ENCODE measurements at regions of chr3 and their contacts with region 1.

Region 1: GRCh38 chr3:129490242-129491045 is 38.0 kb upstream of the RHO start:
- DNase-seq: peak; percentile 84 to 86
- ATAC-seq: peak; percentile 64 to 75
- H3K4me3 ChIP-seq: no peak overlapping the region
- H3K27ac ChIP-seq: peak overlapping the region; percentile 71 to 84 (median 78)
- H3K4me1 ChIP-seq: peaks cover 39 to 47% of the 10 kb centered on the region in 2 donors
- H3K27me3 ChIP-seq: no peaks in the 10 kb centered on the region
- CTCF ChIP-seq: peak; percentile 81 to 91 (median 88)
- POLR2A ChIP-seq: no peak

Region 2: GRCh38 chr3:129180461-129180860 is 310.0 kb before region 1 on chr3:
- in situ Hi-C with region 1: no loop called
- intact Hi-C with region 1: no loop called
- DNase-seq: peak; percentile 50 to 71
- ATAC-seq: peak; percentile 21 to 38
- H3K4me3 ChIP-seq: peak overlapping the region; percentile 85 to 97 (median 95)
- H3K27ac ChIP-seq: peak overlapping the region; percentile 96 to 100 (median 100)
- H3K4me1 ChIP-seq: peaks cover 60 to 64% of the 10 kb centered on the region in 2 donors
- H3K27me3 ChIP-seq: no peaks in the 10 kb centered on the region
- CTCF ChIP-seq: no peak
- POLR2A ChIP-seq: peak in 1 of 2 donors; percentile 47

Region 3: GRCh38 chr3:129606636-129607390 is 116.4 kb after region 1 on chr3 and contains the start of gene PLXND1:
- in situ Hi-C with region 1: loop called in 1 of 4 experiments (anchors 10 kb)
- intact Hi-C with region 1: loop called (anchors 5 kb)
- DNase-seq: peak; percentile 47 to 51
- ATAC-seq: peak; percentile 38 to 52
- H3K4me3 ChIP-seq: peak within 1 kb of the TSS; percentile 61 to 66 (median 62)
- H3K27ac ChIP-seq: peak within 1 kb of the TSS; percentile 82 to 93 (median 86)
- H3K4me1 ChIP-seq: peaks cover 26 to 44% of the 10 kb centered on the region in 2 donors
- H3K27me3 ChIP-seq: peaks cover 0 to 15% (median 6%) of the 10 kb centered on the region in 3 donors
- CTCF ChIP-seq: no peak
- POLR2A ChIP-seq: peak; percentile 34 to 55
- total RNA-seq, gene PLXND1: 15.7 to 70.9 (median 19.9) TPM

Region 4: GRCh38 chr3:129611812-129612533 is 121.5 kb after region 1 on chr3:
- in situ Hi-C with region 1: loop called in 1 of 4 experiments (anchors 10 kb)
- intact Hi-C with region 1: loop called (anchors 5 kb)
- DNase-seq: no peak
- ATAC-seq: no peak
- H3K4me3 ChIP-seq: no peak overlapping the region
- H3K27ac ChIP-seq: peak overlapping the region; percentile 9 to 53 (median 48)
- H3K4me1 ChIP-seq: peaks cover 5 to 40% of the 10 kb centered on the region in 2 donors
- H3K27me3 ChIP-seq: no peaks in the 10 kb centered on the region
- CTCF ChIP-seq: no peak
- POLR2A ChIP-seq: no peak

Region 5: DNA sequence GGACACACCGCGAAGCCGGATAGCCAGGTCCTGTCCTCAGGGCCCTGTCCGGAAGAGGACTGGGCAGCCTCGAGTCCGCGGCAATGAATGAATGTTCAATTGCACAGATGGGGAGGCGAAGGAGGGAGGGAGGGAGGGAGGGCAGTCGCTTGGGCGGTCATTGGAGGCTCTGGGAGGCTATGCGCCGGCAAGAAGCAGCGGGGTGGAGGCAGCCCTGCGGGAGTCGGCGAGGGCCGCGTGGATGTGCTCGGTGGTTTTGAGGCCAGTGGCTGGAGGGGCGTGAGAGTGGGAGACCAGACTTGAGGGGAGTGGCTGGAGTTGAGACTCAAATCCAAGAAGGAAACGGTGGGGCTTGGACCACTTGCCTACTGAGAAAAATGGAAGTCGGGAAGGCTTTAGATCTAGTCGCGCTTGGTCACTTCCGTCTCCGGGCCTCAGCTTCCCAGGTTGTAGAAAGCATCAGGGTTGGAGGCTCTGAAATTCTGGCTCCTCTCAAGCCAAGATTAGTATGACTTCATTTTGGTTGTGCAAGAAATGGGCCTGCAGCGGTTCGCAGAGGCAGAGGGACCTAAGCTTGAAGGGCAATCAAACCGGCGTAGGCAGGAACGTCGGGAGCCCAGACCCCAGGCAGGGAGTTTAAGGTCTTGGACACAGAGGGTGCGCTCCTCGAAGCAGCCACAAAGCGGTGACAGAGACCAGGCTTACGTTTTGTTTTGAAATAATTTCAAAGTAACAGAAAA is 137.2 kb after region 1 on chr3:
- in situ Hi-C with region 1: loop called in 1 of 4 experiments (anchors 10 kb)
- intact Hi-C with region 1: loop called (anchors 5 kb)
- DNase-seq: peak; percentile 49 to 71
- ATAC-seq: peak; percentile 57 to 61
- H3K4me3 ChIP-seq: peak overlapping the region; percentile 77 to 97 (median 88)
- H3K27ac ChIP-seq: peak overlapping the region; percentile 95 to 99 (median 97)
- H3K4me1 ChIP-seq: peaks cover 39 to 41% of the 10 kb centered on the region in 2 donors
- H3K27me3 ChIP-seq: no peaks in the 10 kb centered on the region
- CTCF ChIP-seq: peak; percentile 77 to 87 (median 83)
- POLR2A ChIP-seq: no peak

Region 6: DNA sequence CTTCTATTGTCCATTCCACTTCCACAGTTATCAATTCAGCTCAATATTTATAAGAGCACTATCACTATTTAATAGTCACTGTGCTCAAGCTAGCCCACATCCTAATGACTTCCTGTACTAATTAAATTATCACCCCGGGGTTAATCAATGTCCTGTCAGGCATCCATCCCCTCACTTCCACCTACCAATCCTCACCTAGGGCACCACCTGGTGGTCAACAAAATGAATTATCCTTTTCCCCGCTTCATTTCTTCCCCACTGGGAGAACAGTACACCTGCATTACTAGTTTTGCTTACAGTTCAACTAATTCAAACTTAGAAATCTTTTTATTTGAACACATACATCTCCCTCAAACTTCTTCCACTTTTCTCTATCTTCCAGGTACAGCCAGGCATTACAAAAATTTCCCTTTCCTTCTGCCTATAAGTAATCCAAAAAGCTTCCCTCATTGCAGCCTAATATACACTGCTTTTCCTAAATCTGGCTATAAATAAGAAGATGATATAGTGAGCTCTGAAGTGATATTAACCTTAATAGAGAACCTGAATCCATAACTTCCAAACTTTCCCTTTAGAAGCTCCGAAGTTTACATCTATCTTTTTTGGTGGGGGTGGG is 334.6 kb after region 1 on chr3:
- in situ Hi-C with region 1: loop called (anchors 5 to 25 kb)
- intact Hi-C with region 1: loop called (anchors 1 kb)
- DNase-seq: peak in 1 of 2 donors; percentile 20
- ATAC-seq: peak in 1 of 2 donors; percentile 41
- H3K4me3 ChIP-seq: no peak overlapping the region
- H3K27ac ChIP-seq: no peak overlapping the region
- H3K4me1 ChIP-seq: peaks cover 0 to 7% of the 10 kb centered on the region in 2 donors
- H3K27me3 ChIP-seq: no peaks in the 10 kb centered on the region
- CTCF ChIP-seq: peak; percentile 65 to 81 (median 76)
- POLR2A ChIP-seq: no peak

Region 7: GRCh38 chr3:129942296-129942695 is 451.9 kb after region 1 on chr3:
- in situ Hi-C with region 1: loop called in 3 of 4 experiments (anchors 25 kb)
- intact Hi-C with region 1: no loop called
- DNase-seq: peak; percentile 18
- ATAC-seq: no peak
- H3K4me3 ChIP-seq: no peak overlapping the region
- H3K27ac ChIP-seq: no peak overlapping the region
- H3K4me1 ChIP-seq: no peaks in the 10 kb centered on the region
- H3K27me3 ChIP-seq: peaks cover 0 to 4% (median 0%) of the 10 kb centered on the region in 3 donors
- CTCF ChIP-seq: peak; percentile 32 to 60 (median 50)
- POLR2A ChIP-seq: no peak

Measured in gastrocnemius medialis (tissue), 4 donors.